ENCODE measurements at regions of chr16 and their contacts with region 1.

Region 1: DNA sequence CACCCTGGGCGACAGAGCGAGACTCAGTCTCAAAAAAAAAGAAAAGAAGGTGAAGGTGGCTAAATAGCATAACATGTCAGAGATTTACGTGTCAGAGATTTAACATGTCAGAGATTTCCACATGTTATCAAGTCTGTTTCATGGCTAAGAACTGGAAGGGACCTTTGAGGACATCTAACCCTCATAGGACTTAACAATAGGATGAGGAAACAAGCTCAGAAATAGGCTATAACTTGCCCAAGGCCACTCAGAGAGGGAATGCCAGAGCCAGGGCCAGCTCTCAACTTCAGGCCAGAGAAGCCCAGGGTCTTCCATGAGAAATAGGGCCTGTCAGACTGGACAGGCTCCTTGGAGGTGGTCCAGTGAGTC is 26.8 kb upstream of the ZNF629 start:
- DNase-seq: no peak
- ATAC-seq: no peak
- H3K4me3 Mint-ChIP-seq: peak overlapping the region; percentile 73
- H3K27ac Mint-ChIP-seq: peak overlapping the region; percentile 85
- H3K4me1 Mint-ChIP-seq: peaks cover 12% of the 10 kb centered on the region
- H3K27me3 Mint-ChIP-seq: no peaks in the 10 kb centered on the region
- CTCF ChIP-seq: no peak

Region 2: GRCh38 chr16:30669896-30670797 is 143.7 kb before region 1 on chr16:
- CTCF ChIA-PET with region 1: no interaction called
- POLR2A ChIA-PET with region 1: no interaction called
- intact Hi-C with region 1: no loop called
- DNase-seq: no peak
- ATAC-seq: no peak
- H3K4me3 Mint-ChIP-seq: no peak overlapping the region
- H3K27ac Mint-ChIP-seq: no peak overlapping the region
- H3K4me1 Mint-ChIP-seq: peaks cover 5% of the 10 kb centered on the region
- H3K27me3 Mint-ChIP-seq: no peaks in the 10 kb centered on the region
- CTCF ChIP-seq: no peak

Region 3: DNA sequence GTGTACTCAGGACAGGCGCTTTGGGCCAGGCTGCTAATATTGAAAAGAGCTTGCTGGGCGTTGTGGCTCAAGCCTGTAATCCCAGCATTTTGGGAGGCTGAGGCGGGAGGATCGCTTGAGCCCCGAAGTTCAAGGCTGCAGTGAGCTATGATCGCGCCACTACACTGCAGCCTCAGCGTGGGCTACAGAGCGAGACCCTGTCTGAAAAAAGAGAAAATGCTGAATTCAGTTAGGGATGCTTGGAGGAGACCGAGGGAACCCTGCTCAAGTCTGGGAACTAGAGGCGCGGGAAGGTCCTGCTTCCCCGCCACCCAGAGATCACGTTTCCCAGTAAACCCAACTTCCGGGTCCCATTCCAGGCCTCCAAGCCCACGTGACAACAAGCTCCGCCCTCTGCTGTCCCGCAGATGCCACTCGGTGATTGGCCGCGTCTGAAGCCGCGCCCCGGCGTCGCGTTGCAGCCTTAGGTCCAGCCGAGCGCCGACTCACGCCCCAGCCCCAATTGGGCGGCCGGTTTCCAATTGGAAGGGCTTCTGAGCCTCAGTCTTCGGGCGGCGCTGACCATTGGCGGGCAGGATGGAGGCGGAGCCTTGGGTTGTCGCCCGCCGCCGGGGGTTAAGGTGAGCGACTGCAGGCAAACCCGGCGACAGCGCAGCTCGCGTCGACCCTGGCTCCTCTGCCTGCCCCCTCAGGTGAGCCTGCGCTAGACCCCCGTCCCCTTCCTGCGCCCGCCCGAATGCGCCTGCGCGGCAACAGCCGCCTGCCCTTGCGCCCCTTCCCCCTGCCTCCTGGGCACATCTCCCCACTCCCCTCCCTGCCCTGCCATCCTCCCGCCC is 65.8 kb before region 1 on chr16 and contains the start of gene PHKG2:
- CTCF ChIA-PET with region 1: interaction called, 16 read pairs
- POLR2A ChIA-PET with region 1: no interaction called
- intact Hi-C with region 1: no loop called
- DNase-seq: peak; percentile 99
- ATAC-seq: peak; percentile 99
- H3K4me3 Mint-ChIP-seq: peak within 1 kb of the TSS; percentile 90
- H3K27ac Mint-ChIP-seq: peak within 1 kb of the TSS; percentile 84
- H3K4me1 Mint-ChIP-seq: peaks cover 21% of the 10 kb centered on the region
- H3K27me3 Mint-ChIP-seq: no peaks in the 10 kb centered on the region
- CTCF ChIP-seq: no peak
- total RNA-seq, gene PHKG2: 27.8 to 30.3 TPM

Region 4: GRCh38 chr16:30761928-30762810 is 51.6 kb before region 1 on chr16 and contains the starts of genes CFAP119 and RNF40:
- CTCF ChIA-PET with region 1: interaction called, 10 read pairs
- POLR2A ChIA-PET with region 1: no interaction called
- intact Hi-C with region 1: no loop called
- DNase-seq: peak; percentile 97
- ATAC-seq: peak; percentile 97
- H3K4me3 Mint-ChIP-seq: peak within 1 kb of the TSS; percentile 93
- H3K27ac Mint-ChIP-seq: peak within 1 kb of the TSS; percentile 82
- H3K4me1 Mint-ChIP-seq: peaks cover 24% of the 10 kb centered on the region
- H3K27me3 Mint-ChIP-seq: no peaks in the 10 kb centered on the region
- CTCF ChIP-seq: no peak
- total RNA-seq, gene CFAP119: 3.8 to 3.9 TPM
- total RNA-seq, gene RNF40: 63.2 to 68.1 TPM

Region 5: GRCh38 chr16:30797670-30798309 is 16.0 kb before region 1 on chr16:
- CTCF ChIA-PET with region 1: interaction called, 10 read pairs
- POLR2A ChIA-PET with region 1: interaction called, 11 read pairs
- intact Hi-C with region 1: no loop called
- DNase-seq: no peak
- ATAC-seq: no peak
- H3K4me3 Mint-ChIP-seq: no peak overlapping the region
- H3K27ac Mint-ChIP-seq: no peak overlapping the region
- H3K4me1 Mint-ChIP-seq: no peaks in the 10 kb centered on the region
- H3K27me3 Mint-ChIP-seq: no peaks in the 10 kb centered on the region
- CTCF ChIP-seq: no peak

Region 6: GRCh38 chr16:30829130-30830071 is 15.6 kb after region 1 on chr16:
- CTCF ChIA-PET with region 1: interaction called, 11 read pairs
- POLR2A ChIA-PET with region 1: no interaction called
- intact Hi-C with region 1: no loop called
- DNase-seq: no peak
- ATAC-seq: no peak
- H3K4me3 Mint-ChIP-seq: no peak overlapping the region
- H3K27ac Mint-ChIP-seq: no peak overlapping the region
- H3K4me1 Mint-ChIP-seq: no peaks in the 10 kb centered on the region
- H3K27me3 Mint-ChIP-seq: peaks cover 4% of the 10 kb centered on the region
- CTCF ChIP-seq: no peak

Region 7: GRCh38 chr16:30941600-30942425 is 128.0 kb after region 1 on chr16:
- CTCF ChIA-PET with region 1: interaction called, 10 read pairs
- POLR2A ChIA-PET with region 1: no interaction called
- intact Hi-C with region 1: no loop called
- DNase-seq: peak; percentile 80
- ATAC-seq: peak; percentile 98
- H3K4me3 Mint-ChIP-seq: peak overlapping the region; percentile 33
- H3K27ac Mint-ChIP-seq: no peak overlapping the region
- H3K4me1 Mint-ChIP-seq: peaks cover 22% of the 10 kb centered on the region
- H3K27me3 Mint-ChIP-seq: no peaks in the 10 kb centered on the region
- CTCF ChIP-seq: peak; percentile 91